Naive thymus-derived CD8-positive, alpha-beta T cell (primary cell): ENCODE measurements at regions of chr12 and their contacts with region 1.

Region 1: DNA sequence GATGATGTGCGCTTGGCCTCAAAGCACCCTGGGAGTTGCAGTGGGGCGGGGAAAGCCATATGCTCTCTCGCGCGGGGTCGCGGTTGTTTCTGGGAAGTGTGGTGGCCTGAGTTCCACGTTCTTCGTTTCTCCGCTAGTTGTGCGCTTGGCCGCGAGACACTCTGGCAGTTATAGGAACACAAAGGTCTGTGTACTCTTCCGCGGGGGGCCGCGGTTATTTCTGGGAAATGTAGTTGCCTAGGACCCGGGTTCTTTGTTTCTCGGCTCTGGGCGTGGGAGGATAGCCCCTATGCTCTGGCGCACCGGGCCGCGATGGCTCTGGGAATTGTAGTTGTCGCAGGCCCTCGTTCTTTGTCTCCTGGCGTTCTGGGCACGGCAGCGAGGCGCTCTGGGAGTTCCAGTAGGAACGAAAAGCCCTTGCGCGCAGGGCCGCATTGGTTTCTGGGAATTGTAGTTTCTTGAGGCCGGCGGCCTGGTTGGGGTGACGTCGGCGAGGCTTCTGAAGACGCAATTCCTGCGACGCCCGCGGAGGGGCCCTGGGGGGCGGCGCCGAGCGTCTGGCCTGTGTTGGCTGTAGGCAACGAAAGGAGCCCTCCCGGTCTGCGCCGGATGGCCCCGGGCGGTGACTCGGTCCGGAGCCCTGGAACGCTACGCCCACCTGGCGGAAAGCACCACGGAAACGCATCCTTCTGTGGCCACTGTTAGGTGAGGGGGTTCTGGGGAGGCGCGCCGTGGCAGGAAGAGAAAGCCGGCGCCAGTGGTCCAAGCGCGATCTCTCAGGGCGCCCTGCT is at the start of gene ZNF140:
- DNase-seq: peak; percentile 92 to 98 (median 97)
- ATAC-seq: peak; percentile 63 to 66
- H3K4me3 Mint-ChIP-seq: peak within 1 kb of the TSS in 2 of 10 donors; percentile 23 to 61
- H3K27ac Mint-ChIP-seq: peak within 1 kb of the TSS in 3 of 10 donors; percentile 31 to 85 (median 84)
- H3K4me1 Mint-ChIP-seq: peaks cover 1 to 18% (median 10%) of the 10 kb centered on the region in 4 donors
- H3K27me3 Mint-ChIP-seq: no peaks in the 10 kb centered on the region
- polyA plus RNA-seq, gene ZNF140: 18.4 to 22.3 (median 22.0) TPM

Region 2: DNA sequence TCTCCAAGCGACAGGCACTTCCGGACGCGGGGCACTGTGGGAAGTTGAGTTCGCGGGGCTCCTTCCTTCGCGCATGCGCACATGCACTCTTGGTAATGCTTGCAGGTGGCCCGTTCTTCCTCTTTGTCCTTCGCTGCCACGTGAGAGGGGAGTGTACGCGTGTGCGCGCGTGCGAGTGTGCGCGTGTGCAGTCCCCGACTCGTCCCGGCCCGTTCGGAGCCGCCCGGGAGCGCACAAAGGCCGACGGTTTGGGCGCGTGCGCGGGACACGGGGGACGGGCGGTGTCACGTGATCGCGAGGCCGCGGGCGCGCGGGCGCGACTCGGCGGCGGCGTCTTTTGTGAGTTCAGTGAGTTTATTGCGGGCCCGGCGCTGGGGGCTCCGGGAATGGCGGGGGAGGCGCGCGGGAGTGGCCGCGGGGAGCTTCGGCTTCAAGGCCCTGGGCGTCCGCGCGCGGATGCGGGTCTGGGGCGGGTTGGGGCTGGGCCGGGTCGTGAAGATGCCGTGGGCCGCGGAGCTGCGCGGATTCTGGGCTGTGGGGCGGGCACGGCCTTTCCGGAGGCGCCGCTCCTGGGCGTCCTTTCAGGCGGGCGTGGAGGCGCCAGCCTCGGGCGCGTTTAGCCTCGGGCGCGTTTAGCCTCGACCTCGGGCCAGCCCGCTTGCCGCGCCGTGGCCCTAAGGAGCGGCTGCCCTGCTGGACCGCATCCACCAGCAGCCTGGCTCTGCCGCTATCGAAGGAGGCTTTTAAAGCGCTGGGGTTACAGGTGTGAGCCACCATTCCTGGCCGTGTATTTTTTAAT is 43.2 kb before region 1 on chr12 and contains the start of gene ZNF84:
- POLR2A ChIA-PET with region 1: interaction called, 15 read pairs
- DNase-seq: peak; percentile 93 to 99 (median 97)
- ATAC-seq: peak; percentile 94 to 95
- H3K4me3 Mint-ChIP-seq: peak within 1 kb of the TSS; percentile 86 to 96 (median 94)
- H3K27ac Mint-ChIP-seq: peak within 1 kb of the TSS; percentile 92 to 98 (median 95)
- H3K4me1 Mint-ChIP-seq: peaks cover 0 to 22% (median 8%) of the 10 kb centered on the region in 4 donors
- H3K27me3 Mint-ChIP-seq: peaks cover 0 to 5% (median 2%) of the 10 kb centered on the region in 5 donors
- polyA plus RNA-seq, gene ZNF84: 16.9 to 19.0 (median 18.2) TPM

Region 3: GRCh38 chr12:133120385-133121191 is 40.0 kb after region 1 on chr12:
- POLR2A ChIA-PET with region 1: no interaction called
- DNase-seq: no peak
- ATAC-seq: no peak
- H3K4me3 Mint-ChIP-seq: peak overlapping the region in 1 of 10 donors; percentile 20
- H3K27ac Mint-ChIP-seq: peak overlapping the region in 1 of 10 donors; percentile 59
- H3K4me1 Mint-ChIP-seq: peaks cover 0 to 3% (median 0%) of the 10 kb centered on the region in 4 donors
- H3K27me3 Mint-ChIP-seq: no peaks in the 10 kb centered on the region

Region 4: DNA sequence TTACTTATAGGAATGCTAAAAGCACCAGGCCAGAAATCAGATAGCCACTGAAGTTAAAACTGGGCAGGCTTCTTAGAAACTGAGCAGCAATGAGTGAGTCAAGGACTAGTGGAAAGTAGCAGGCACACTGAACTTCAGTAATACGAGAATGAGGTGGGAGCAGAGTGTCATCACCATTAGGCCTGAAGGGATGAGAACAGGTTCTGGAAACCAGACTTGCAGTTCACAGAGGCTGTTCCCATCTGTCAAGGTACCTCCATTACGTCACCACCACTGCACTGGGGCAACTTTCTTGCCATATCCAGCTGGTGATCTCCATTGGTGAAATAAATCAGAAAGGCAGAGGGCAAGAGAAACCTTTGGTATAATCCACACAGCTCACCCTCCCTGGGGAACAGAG is 65.4 kb after region 1 on chr12:
- POLR2A ChIA-PET with region 1: no interaction called
- DNase-seq: no peak
- ATAC-seq: no peak
- H3K4me3 Mint-ChIP-seq: no peak overlapping the region
- H3K27ac Mint-ChIP-seq: no peak overlapping the region
- H3K4me1 Mint-ChIP-seq: no peaks in the 10 kb centered on the region
- H3K27me3 Mint-ChIP-seq: no peaks in the 10 kb centered on the region

Region 5: DNA sequence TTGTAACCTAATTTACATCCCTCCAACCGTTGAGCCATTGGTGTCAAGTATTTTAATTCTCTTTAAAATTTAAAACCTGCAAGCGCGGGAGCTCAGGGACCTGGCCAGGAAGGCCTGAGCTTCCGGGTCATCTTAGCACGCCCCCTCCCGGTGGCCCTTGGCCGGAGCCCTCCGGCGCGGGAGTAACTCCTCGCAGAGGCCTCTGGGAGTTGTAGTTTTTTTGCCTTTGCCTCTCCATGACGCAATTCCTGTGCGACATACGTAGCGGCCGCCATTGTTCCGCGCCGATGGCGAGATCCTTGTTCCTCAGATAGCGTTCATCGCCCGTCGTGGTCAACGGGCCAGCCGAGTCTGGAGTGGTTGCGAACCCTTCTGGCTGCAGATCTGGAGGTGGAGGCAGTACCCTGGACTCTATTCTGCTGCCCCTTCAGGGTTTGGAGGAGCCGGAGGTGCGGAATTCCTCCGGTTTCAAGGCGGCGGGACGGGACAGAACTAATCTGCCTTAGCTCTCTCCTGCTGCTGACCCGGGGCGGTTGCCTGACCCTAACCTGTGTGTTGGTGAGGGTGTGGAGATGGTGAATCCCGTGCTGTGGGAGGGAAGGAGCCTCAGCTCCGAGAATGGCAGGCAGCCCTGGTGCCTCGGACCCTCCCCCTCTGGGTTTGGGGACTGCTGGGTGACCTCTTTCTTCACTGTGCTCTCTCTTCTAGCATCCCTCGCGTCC is 100.8 kb after region 1 on chr12 and contains the start of gene ZNF268:
- POLR2A ChIA-PET with region 1: interaction called, 21 read pairs
- DNase-seq: peak; percentile 74 to 95 (median 86)
- ATAC-seq: peak; percentile 87 to 94
- H3K4me3 Mint-ChIP-seq: peak within 1 kb of the TSS; percentile 90 to 97 (median 94)
- H3K27ac Mint-ChIP-seq: peak within 1 kb of the TSS; percentile 89 to 97 (median 94)
- H3K4me1 Mint-ChIP-seq: peaks cover 18 to 30% (median 21%) of the 10 kb centered on the region in 4 donors
- H3K27me3 Mint-ChIP-seq: no peaks in the 10 kb centered on the region
- polyA plus RNA-seq, gene ZNF268: 15.3 to 18.3 (median 16.3) TPM